Activated CD8-positive, alpha-beta T cell treated with anti-CD3 and anti-CD28 coated beads for 36 hours (primary cell): ENCODE measurements at regions of chr11 and their contacts with region 1.

Region 1: GRCh38 chr11:27183672-27184457 is 143.2 kb downstream of the BBOX1 start:
- DNase-seq: peak; percentile 63
- ATAC-seq: no peak
- H3K4me3 Mint-ChIP-seq: no peak overlapping the region
- H3K27ac Mint-ChIP-seq: no peak overlapping the region
- H3K4me1 Mint-ChIP-seq: no peaks in the 10 kb centered on the region
- H3K27me3 Mint-ChIP-seq: peaks cover 2% of the 10 kb centered on the region
- CTCF ChIP-seq: peak; percentile 72

Region 2: DNA sequence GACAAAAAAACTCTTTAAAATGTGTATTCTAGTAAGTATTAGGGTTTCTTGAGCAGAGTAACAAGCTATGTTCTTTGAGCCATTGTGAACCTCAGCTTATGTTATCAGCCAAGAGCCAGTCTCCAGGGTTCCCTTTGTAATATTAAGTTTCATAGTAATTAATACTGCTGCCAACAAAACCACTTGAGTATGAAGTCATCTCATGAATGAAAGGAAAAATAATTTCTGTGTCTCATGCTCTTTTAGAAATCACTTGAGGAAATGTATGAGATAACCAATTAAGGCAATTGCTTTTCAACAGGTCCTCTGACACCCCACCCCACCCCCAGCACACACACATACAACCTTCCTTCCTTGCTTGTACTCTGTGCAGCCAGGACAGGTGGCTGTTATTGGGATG is 83.3 kb before region 1 on chr11:
- CTCF ChIA-PET with region 1: no interaction called
- POLR2A ChIA-PET with region 1: no interaction called
- intact Hi-C with region 1: no loop called
- DNase-seq: no peak
- ATAC-seq: no peak
- H3K4me3 Mint-ChIP-seq: no peak overlapping the region
- H3K27ac Mint-ChIP-seq: no peak overlapping the region
- H3K4me1 Mint-ChIP-seq: no peaks in the 10 kb centered on the region
- H3K27me3 Mint-ChIP-seq: no peaks in the 10 kb centered on the region
- CTCF ChIP-seq: no peak

Region 3: DNA sequence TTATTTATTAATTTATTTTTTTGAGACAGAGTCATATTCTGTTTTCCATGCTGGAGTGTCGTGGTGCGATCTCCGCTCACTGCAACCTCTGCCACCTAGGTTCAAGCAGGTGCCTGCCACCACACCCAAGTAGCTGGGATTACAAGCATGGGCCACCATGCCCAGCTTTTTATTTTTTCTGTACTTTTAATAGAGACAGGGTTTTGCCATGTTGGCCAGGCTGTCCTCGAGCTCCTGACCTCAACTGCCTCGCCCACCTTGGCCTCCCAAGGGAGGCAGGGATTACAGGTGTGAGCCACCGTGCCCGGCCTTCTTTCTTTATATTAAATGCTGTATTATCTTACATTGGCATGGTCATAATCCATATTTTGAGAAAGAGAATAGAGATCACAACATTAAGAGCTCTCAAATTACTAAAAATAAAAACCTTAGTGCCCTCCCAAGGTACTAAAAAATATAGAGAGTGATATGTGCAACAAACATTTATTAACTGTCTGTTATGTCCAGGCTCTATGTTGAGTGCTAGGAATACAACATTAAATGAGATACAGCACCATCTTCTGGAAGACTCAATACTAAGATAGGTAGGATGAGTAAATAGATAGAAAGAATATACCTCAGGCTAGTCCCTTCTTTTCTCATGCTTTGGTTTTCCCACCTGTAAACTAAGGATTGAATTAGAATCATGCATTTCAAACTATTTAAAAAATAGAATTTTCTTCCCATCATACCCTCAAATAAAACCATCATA is 59.2 kb before region 1 on chr11:
- CTCF ChIA-PET with region 1: no interaction called
- POLR2A ChIA-PET with region 1: no interaction called
- intact Hi-C with region 1: no loop called
- DNase-seq: no peak
- ATAC-seq: no peak
- H3K4me3 Mint-ChIP-seq: no peak overlapping the region
- H3K27ac Mint-ChIP-seq: no peak overlapping the region
- H3K4me1 Mint-ChIP-seq: no peaks in the 10 kb centered on the region
- H3K27me3 Mint-ChIP-seq: peaks cover 1% of the 10 kb centered on the region
- CTCF ChIP-seq: no peak

Region 4: GRCh38 chr11:27153136-27153535 is 30.7 kb before region 1 on chr11:
- CTCF ChIA-PET with region 1: no interaction called
- POLR2A ChIA-PET with region 1: no interaction called
- intact Hi-C with region 1: no loop called
- DNase-seq: no peak
- ATAC-seq: no peak
- H3K4me3 Mint-ChIP-seq: no peak overlapping the region
- H3K27ac Mint-ChIP-seq: no peak overlapping the region
- H3K4me1 Mint-ChIP-seq: no peaks in the 10 kb centered on the region
- H3K27me3 Mint-ChIP-seq: no peaks in the 10 kb centered on the region
- CTCF ChIP-seq: no peak

Region 5: GRCh38 chr11:27296497-27296896 is 112.6 kb after region 1 on chr11:
- CTCF ChIA-PET with region 1: interaction called, 6 read pairs
- POLR2A ChIA-PET with region 1: no interaction called
- intact Hi-C with region 1: loop called (anchors 10 kb)
- DNase-seq: no peak
- ATAC-seq: no peak
- H3K4me3 Mint-ChIP-seq: no peak overlapping the region
- H3K27ac Mint-ChIP-seq: no peak overlapping the region
- H3K4me1 Mint-ChIP-seq: peaks cover 3% of the 10 kb centered on the region
- H3K27me3 Mint-ChIP-seq: peaks cover 3% of the 10 kb centered on the region
- CTCF ChIP-seq: peak; percentile 32

Region 6: DNA sequence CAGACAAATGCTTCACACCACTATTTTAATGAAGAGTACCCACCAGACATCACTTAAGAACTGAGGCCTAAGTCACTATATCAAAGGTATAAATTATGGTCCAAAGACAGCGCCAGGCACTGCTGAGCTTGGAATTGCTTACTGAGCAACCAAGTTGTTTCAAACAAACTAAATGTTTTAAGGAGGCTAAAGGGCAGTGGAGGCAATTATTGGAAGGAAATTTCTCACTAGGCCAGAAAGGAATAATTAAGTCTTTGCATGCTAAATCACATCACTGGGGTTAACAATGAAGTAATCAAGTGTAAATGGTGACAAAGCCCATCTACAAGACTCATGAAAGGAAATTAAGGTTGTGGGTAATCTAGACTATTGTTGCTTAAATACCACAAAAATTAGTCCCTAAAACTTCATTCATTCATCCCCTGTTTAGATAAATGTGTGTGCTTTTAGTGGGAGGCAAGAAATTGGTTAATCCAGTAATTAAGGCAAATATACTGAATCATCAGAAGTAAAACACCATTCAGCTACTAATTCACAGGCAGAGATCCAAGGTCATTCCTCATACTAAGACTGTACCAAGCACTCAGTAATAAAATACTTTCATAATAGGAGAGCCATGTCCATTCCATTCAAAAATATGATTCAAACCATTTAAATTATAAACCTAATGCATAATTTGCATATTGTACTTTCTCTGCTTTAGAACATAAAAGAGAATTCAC is 267.5 kb after region 1 on chr11:
- CTCF ChIA-PET with region 1: no interaction called
- POLR2A ChIA-PET with region 1: no interaction called
- intact Hi-C with region 1: no loop called
- DNase-seq: no peak
- ATAC-seq: no peak
- H3K4me3 Mint-ChIP-seq: no peak overlapping the region
- H3K27ac Mint-ChIP-seq: no peak overlapping the region
- H3K4me1 Mint-ChIP-seq: no peaks in the 10 kb centered on the region
- H3K27me3 Mint-ChIP-seq: peaks cover 5% of the 10 kb centered on the region
- CTCF ChIP-seq: no peak